PC-9 (cell line): ENCODE measurements at regions of chr3 and their contacts with region 1.

Region 1: DNA sequence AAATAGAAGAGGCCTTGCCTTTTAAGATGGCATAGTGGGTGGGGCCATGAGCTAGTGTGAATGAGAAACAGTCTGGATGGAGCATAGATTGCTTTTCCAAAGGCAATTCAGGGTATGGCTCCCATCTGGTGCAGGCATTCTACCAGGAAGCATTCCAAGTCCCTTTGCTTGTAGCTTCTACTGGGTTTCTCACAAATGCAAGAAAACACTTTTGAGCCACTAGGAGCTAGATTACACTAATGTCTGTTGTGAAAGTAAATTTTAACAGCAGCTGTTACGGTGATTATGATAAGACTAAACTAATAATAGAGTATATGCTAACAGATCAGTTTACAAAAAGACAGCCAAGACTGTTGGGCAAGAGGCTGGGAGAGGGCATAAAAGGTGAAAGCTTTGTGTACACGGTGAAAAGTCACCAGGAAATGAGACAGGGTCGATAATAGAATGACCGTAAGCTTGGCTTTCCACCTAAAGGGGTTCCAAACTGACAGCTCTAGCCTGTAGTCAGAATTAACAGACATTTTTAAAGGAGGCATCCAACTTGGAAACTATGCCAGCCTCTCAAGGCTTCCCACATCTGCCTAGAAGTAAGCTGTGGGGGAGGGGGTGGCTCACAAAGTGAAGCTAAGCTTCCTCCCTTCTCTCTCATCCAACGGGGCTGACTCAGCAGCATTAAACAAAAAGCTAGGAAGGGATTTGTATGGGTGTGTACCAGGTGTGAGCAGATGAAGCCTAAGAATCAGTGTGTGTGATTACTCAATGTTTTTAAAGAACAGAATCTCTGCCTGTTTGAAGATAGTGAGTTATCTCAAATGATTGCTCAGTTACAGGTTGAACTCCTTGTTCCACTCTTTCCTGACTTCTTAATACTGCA is 61.1 kb upstream of the GPD1L start:
- DNase-seq: peak; percentile 47 to 90
- H3K4me3 ChIP-seq: peak overlapping the region; percentile 38; the same call in 1 of the 2 replicates
- H3K27ac ChIP-seq: peak overlapping the region; percentile 69
- H3K4me1 ChIP-seq: peaks cover 28% of the 10 kb centered on the region
- H3K27me3 ChIP-seq: no peaks in the 10 kb centered on the region
- CTCF ChIP-seq: no peak

Region 2: DNA sequence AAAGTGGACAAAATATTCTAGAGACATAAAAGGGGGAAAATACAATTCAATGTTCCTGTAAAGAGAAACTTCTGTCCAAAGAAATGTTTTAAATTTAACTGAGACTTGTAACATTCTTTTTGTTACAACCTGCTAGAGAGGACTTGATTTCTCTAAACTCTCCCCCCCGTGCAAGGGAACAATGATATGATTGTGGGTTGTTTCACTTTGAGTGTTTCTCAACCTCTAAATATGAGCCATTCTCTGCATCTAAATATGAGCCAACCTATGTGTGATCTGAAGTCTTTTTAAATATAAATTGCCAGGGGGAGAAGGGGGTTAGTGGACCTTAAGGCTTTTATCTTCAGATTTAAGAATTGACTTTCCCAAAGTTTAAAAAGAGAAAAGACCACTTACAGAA is 49.1 kb before region 1 on chr3:
- CTCF ChIA-PET with region 1: no interaction called
- POLR2A ChIA-PET with region 1: no interaction called
- intact Hi-C with region 1: no loop called
- DNase-seq: no peak
- H3K4me3 ChIP-seq: no peak overlapping the region
- H3K27ac ChIP-seq: no peak overlapping the region
- H3K4me1 ChIP-seq: no peaks in the 10 kb centered on the region
- H3K27me3 ChIP-seq: no peaks in the 10 kb centered on the region
- CTCF ChIP-seq: no peak

Region 3: GRCh38 chr3:32106280-32106928 is 61.1 kb after region 1 on chr3 and contains the start of gene GPD1L:
- CTCF ChIA-PET with region 1: interaction called, 3 read pairs
- POLR2A ChIA-PET with region 1: interaction called, 4 read pairs
- intact Hi-C with region 1: loop called (anchors 2 kb)
- DNase-seq: peak; percentile 73 to 95
- H3K4me3 ChIP-seq: peak within 1 kb of the TSS; percentile 63
- H3K27ac ChIP-seq: peak within 1 kb of the TSS; percentile 61
- H3K4me1 ChIP-seq: peaks cover 42% of the 10 kb centered on the region
- H3K27me3 ChIP-seq: no peaks in the 10 kb centered on the region
- CTCF ChIP-seq: no peak
- total RNA-seq, gene GPD1L: 10.3 and 11.2 TPM in 2 replicates